ENCODE measurements at regions of chrX and their contacts with region 1.

Region 1: GRCh38 chrX:123833387-123833786 is 26.5 kb upstream of the XIAP start:
- DNase-seq: peak; percentile 62 to 68
- H3K4me3 ChIP-seq: no peak overlapping the region
- H3K27ac ChIP-seq: no peak overlapping the region
- H3K4me1 ChIP-seq: peaks cover 22% of the 10 kb centered on the region
- H3K27me3 ChIP-seq: no peaks in the 10 kb centered on the region
- CTCF ChIP-seq: peak; percentile 92

Region 2: DNA sequence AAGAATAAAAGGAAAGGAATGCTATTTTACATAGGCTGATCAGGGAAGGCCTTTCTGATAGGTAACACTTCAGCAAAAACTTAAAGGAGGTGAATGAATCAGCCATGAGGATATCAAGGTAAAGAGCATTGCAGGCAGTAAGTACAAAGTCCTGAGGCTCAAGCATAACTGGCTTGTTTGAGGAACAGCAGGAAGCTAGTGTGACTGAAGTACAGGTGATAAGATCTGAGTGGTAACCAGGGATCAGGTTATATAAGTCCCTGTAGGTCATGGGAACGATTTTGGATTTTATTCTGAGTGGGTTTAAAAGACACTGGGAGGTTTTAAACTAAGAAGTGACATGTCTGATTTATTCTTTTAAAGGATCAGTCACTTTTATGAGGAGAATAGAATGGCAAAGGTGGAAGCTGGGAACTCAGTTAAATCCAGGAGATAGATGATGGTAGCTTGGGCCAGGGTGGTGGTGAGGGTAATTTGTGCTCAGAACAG is 53.4 kb before region 1 on chrX:
- CTCF ChIA-PET with region 1: interaction called, 21 read pairs
- POLR2A ChIA-PET with region 1: no interaction called
- intact Hi-C with region 1: loop called (anchors 5 kb)
- DNase-seq: peak; percentile 14 to 90
- H3K4me3 ChIP-seq: no peak overlapping the region
- H3K27ac ChIP-seq: peak overlapping the region; percentile 78
- H3K4me1 ChIP-seq: peaks cover 26% of the 10 kb centered on the region
- H3K27me3 ChIP-seq: no peaks in the 10 kb centered on the region
- CTCF ChIP-seq: no peak

Region 3: DNA sequence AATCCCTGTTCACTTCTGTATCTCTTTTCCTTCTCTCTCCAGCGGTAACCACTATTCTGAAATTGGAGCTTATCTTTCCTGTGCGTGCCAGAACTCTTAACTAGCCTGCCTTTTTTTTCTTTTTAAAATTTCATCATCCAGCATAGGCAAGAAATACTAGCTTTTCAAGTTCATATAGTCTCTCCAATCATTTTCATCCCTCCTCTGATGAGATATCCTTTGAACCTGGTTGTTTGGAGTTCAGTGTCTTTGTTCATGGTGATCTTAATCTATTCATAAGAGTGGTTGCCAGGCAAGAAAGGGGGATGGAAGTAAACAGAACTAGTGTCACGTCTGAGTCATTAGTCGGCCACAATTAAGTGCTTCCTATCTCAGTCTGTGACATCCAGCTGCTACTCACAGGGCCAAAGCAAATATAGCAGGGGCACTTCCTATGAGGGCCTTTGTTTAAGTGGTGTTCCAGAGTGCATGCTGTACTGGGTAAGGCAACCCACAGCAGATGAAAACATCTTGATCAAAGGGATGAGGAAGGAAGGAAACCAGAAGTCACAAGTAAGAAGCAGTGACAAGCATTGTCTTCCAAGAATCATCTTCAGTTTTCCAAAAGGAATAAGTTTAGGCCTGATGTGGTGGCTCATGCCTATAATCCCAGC is 29.9 kb before region 1 on chrX:
- CTCF ChIA-PET with region 1: interaction called, 11 read pairs
- POLR2A ChIA-PET with region 1: no interaction called
- intact Hi-C with region 1: no loop called
- DNase-seq: peak; percentile 71 to 99
- H3K4me3 ChIP-seq: no peak overlapping the region
- H3K27ac ChIP-seq: peak overlapping the region; percentile 65
- H3K4me1 ChIP-seq: peaks cover 59% of the 10 kb centered on the region
- H3K27me3 ChIP-seq: no peaks in the 10 kb centered on the region
- CTCF ChIP-seq: no peak

Region 4: GRCh38 chrX:123909523-123909922 is 76.1 kb after region 1 on chrX:
- CTCF ChIA-PET with region 1: no interaction called
- POLR2A ChIA-PET with region 1: no interaction called
- intact Hi-C with region 1: no loop called
- DNase-seq: no peak
- H3K4me3 ChIP-seq: no peak overlapping the region
- H3K27ac ChIP-seq: no peak overlapping the region
- H3K4me1 ChIP-seq: no peaks in the 10 kb centered on the region
- H3K27me3 ChIP-seq: no peaks in the 10 kb centered on the region
- CTCF ChIP-seq: no peak

Region 5: DNA sequence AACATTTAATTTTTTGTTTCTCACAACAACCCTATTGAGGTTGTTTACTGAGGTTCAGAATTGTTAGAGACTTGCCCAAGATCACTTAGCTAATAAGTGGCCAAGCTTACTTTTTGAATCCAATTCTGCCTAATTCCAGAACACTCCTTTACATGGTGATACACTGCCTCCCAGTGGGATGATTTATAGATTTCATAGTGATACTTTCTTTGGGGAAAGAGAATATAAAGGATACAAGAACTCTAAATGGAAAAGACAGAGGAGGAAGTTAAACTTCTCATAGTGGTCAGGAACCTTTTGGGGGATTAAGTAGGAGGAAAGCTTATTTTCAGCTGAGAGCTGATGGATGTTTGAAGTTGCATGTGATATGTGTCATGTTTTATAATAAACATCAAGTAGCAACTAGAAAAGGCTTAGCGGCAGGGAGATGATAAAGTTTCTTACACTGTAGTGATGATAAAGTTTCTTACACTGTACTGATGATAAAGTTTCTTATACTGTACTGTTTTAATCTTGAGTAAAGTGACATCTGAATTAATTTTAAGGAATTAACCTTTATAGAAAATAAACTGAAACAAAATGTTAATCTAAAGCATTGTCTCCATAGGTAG is 143.4 kb after region 1 on chrX:
- CTCF ChIA-PET with region 1: interaction called, 13 read pairs
- POLR2A ChIA-PET with region 1: no interaction called
- intact Hi-C with region 1: loop called (anchors 1 kb)
- DNase-seq: peak in 1 of 2 experiments; percentile 67
- H3K4me3 ChIP-seq: no peak overlapping the region
- H3K27ac ChIP-seq: no peak overlapping the region
- H3K4me1 ChIP-seq: no peaks in the 10 kb centered on the region
- H3K27me3 ChIP-seq: no peaks in the 10 kb centered on the region
- CTCF ChIP-seq: peak; percentile 73

Region 6: DNA sequence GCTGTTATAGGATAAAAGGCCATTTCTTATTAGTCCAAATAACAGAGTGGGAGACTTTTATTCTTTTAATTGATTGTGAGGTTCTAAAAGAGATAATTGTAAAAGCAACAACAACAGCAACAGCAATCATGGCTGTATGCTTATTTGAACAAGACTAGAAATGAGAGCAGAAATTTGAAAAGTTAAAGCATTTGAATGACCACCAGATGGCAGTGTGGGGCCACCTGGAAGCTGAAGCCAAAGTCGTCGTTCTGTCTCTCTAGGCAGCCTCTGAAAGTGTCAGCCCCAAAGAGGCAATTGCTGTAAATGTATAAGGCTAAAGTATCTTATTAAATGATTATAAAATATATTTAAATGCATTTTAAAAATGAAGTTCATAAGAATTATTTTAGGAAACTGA is 555.2 kb after region 1 on chrX:
- CTCF ChIA-PET with region 1: interaction called, 9 read pairs
- POLR2A ChIA-PET with region 1: no interaction called
- intact Hi-C with region 1: loop called (anchors 5 kb)
- DNase-seq: peak in 1 of 2 experiments; percentile 28
- H3K4me3 ChIP-seq: no peak overlapping the region
- H3K27ac ChIP-seq: no peak overlapping the region
- H3K4me1 ChIP-seq: no peaks in the 10 kb centered on the region
- H3K27me3 ChIP-seq: no peaks in the 10 kb centered on the region
- CTCF ChIP-seq: peak; percentile 80

Measured in PC-9 (cell line).